ENCODE measurements at regions of chr18 and their contacts with region 1.

Region 1: GRCh38 chr18:8988261-8988871 is 114.1 kb upstream of the NDUFV2 start:
- DNase-seq: peak; percentile 87
- H3K4me3 ChIP-seq: no peak overlapping the region
- H3K27ac ChIP-seq: no peak overlapping the region
- H3K4me1 ChIP-seq: peaks cover 36% of the 10 kb centered on the region
- CTCF ChIP-seq: peak; percentile 97

Region 2: GRCh38 chr18:8478166-8478967 is 510.0 kb before region 1 on chr18:
- CTCF ChIA-PET with region 1: no interaction called
- POLR2A ChIA-PET with region 1: interaction called, 4 read pairs
- intact Hi-C with region 1: loop called (anchors 2 kb)
- DNase-seq: peak; percentile 66
- H3K4me3 ChIP-seq: no peak overlapping the region
- H3K27ac ChIP-seq: no peak overlapping the region
- H3K4me1 ChIP-seq: no peaks in the 10 kb centered on the region
- CTCF ChIP-seq: peak; percentile 80

Region 3: DNA sequence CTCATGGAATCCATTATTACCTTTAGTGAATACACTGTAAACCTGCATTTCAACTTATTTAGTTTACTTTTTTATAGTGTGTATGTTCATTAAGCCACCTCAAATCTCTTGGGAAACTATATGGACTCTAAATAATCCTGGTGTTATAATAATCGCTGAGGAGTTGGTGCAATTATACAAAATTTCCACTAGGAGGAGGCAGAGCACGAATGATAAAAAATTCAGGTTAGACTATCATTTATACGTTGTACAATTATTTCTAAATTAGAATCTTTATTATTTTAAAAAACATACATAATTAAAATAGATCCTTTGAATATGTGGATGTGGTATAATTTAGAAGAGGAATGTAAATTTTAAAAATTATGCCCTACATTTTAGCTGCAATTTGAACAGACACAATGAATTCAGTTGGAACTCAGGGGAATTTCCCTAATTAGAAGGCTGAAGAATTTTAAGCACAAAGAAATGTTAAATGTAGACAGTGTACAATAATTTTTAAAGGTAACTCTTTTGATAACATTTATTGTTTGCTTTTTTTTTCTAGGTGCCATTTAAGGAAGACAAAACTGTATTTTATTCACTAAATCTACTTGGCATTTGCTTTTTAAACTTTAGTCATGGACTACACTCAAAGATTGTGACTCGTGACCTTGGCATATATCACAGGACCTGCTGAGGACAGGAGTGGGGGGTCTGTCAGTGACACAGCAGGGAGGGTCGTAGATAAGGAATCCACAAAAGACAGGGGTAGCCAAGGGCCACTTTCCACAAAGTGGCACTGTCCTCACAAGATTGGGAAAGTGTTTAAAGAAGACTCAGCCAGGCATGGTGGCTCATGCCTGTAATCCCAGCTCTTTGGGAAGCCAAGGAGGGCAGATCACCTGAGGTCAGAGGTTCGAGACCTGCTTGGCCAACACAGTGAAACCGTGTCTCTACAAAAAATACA is 333.6 kb before region 1 on chr18:
- CTCF ChIA-PET with region 1: interaction called, 8 read pairs
- POLR2A ChIA-PET with region 1: interaction called, 9 read pairs
- intact Hi-C with region 1: loop called (anchors 1 kb)
- DNase-seq: peak; percentile 55
- H3K4me3 ChIP-seq: no peak overlapping the region
- H3K27ac ChIP-seq: no peak overlapping the region
- H3K4me1 ChIP-seq: peaks cover 5% of the 10 kb centered on the region
- CTCF ChIP-seq: peak; percentile 91

Region 4: GRCh38 chr18:8696749-8697211 is 291.6 kb before region 1 on chr18:
- CTCF ChIA-PET with region 1: no interaction called
- POLR2A ChIA-PET with region 1: interaction called, 5 read pairs
- intact Hi-C with region 1: loop called (anchors 2 kb)
- DNase-seq: peak; percentile 75
- H3K4me3 ChIP-seq: peak overlapping the region; percentile 28
- H3K27ac ChIP-seq: peak overlapping the region; percentile 79
- H3K4me1 ChIP-seq: peaks cover 23% of the 10 kb centered on the region
- CTCF ChIP-seq: peak; percentile 97

Region 5: DNA sequence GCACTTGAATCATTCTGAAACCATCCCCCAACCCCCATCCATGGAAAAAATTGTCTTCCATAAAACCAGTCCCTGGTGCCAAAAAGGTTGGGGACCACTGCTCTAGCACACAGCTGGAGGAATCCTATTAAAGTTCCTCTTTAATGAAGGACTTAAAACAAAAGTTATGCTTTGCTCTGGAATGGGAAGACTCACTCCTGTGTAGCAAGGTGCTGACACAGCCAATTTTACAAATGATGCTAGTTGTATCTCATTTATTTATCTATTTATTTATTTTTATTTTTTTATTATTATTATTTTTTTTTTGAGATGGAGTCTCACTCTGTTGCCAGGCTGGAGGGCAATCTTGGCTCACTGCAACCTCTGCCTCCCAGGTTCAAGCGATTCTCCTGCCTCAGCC is 55.2 kb after region 1 on chr18:
- CTCF ChIA-PET with region 1: no interaction called
- POLR2A ChIA-PET with region 1: no interaction called
- intact Hi-C with region 1: no loop called
- DNase-seq: no peak
- H3K4me3 ChIP-seq: no peak overlapping the region
- H3K27ac ChIP-seq: no peak overlapping the region
- H3K4me1 ChIP-seq: no peaks in the 10 kb centered on the region
- CTCF ChIP-seq: no peak

Region 6: DNA sequence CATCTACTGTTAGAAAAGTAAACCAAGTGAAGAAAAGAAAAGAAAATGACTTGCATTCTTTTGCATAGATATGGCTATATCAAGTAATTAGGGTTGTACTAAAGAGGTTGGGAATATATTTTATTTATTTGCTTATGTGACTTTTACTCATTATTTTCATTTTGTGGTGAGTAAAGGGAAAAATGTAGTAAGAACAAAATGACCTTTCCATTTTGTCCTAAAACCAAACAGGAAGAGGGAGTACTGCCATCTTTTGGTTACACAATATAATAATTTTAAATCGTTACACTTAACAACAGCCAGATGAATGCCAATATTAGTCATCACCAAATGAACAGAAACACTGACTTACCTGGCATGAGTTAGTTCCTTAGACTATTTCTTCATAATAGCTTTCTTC is 66.8 kb after region 1 on chr18:
- CTCF ChIA-PET with region 1: no interaction called
- POLR2A ChIA-PET with region 1: no interaction called
- intact Hi-C with region 1: loop called (anchors 2 kb)
- DNase-seq: no peak
- H3K4me3 ChIP-seq: no peak overlapping the region
- H3K27ac ChIP-seq: no peak overlapping the region
- H3K4me1 ChIP-seq: peaks cover 18% of the 10 kb centered on the region
- CTCF ChIP-seq: peak; percentile 78

Region 7: GRCh38 chr18:9079818-9080528 is 91.6 kb after region 1 on chr18:
- CTCF ChIA-PET with region 1: no interaction called
- POLR2A ChIA-PET with region 1: no interaction called
- intact Hi-C with region 1: no loop called
- DNase-seq: no peak
- H3K4me3 ChIP-seq: no peak overlapping the region
- H3K27ac ChIP-seq: no peak overlapping the region
- H3K4me1 ChIP-seq: peaks cover 18% of the 10 kb centered on the region
- CTCF ChIP-seq: no peak

Region 8: GRCh38 chr18:9147440-9148202 is 159.3 kb after region 1 on chr18:
- CTCF ChIA-PET with region 1: no interaction called
- POLR2A ChIA-PET with region 1: no interaction called
- intact Hi-C with region 1: loop called (anchors 2 kb)
- DNase-seq: peak; percentile 80
- H3K4me3 ChIP-seq: peak overlapping the region; percentile 33
- H3K27ac ChIP-seq: peak overlapping the region; percentile 70
- H3K4me1 ChIP-seq: peaks cover 53% of the 10 kb centered on the region
- CTCF ChIP-seq: peak; percentile 98